ENCODE measurements at regions of chr6 and their contacts with region 1.

Region 1: GRCh38 chr6:137811121-137811915 is 55.7 kb upstream of the TNFAIP3 start:
- DNase-seq: peak; percentile 90
- ATAC-seq: peak; percentile 91
- H3K4me3 ChIP-seq: no peak overlapping the region; a peak in 1 of 6 replicates
- H3K27ac ChIP-seq: peak overlapping the region; percentile 65
- H3K4me1 ChIP-seq: peaks cover 66% of the 10 kb centered on the region
- H3K27me3 ChIP-seq: no peaks in the 10 kb centered on the region
- CTCF ChIP-seq: peak; percentile 10; the same call in 1 of the 2 replicates
- EP300 ChIP-seq: peak in 1 of 2 experiments; percentile 58; a peak in 1 of 4 replicates
- POLR2A ChIP-seq: peak; percentile 37 to 46; a peak in 1 of 4 replicates
- RAD21 ChIP-seq: 0 out of 2 replicates have a peak, but pooled peaks have one; percentile 32

Region 2: DNA sequence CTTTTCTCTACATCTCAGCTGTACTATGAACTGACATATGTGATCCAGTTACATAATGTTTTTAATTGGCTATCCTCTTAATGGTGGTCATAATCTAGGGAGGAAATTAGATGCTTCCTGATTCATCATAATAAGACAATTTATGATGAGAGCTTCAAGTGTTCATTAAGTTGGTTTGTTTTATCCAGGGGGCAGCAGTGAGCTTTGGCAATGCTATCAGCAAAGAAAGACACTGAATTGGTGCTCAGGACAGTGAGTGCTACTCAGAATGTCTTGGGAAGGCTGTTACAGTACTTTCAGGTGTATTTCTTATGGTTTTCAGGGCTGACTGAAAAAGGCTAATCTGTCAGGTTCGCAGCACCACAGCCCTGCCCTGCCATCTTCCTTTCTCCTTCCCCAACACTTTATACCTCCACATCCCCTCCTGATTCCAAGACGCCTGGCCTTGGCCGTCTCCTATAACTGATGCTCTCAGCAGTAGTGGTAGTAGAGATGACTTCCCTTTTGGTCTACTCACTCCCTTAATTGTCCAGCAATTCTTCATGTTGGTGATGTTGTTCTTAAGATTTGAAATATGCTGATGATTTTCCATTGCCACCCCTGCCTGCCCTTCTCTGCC is 11.3 kb before region 1 on chr6:
- CTCF ChIA-PET with region 1: no interaction called
- POLR2A ChIA-PET with region 1: interaction called, 7 read pairs
- in situ Hi-C with region 1: no loop called
- intact Hi-C with region 1: loop called (anchors 1 kb)
- DNase-seq: peak; percentile 59
- ATAC-seq: peak; percentile 41; the same call in 2 of the 3 replicates
- H3K4me3 ChIP-seq: no peak overlapping the region
- H3K27ac ChIP-seq: no peak overlapping the region
- H3K4me1 ChIP-seq: peaks cover 100% of the 10 kb centered on the region
- H3K27me3 ChIP-seq: no peaks in the 10 kb centered on the region
- CTCF ChIP-seq: peak; percentile 58
- EP300 ChIP-seq: no peak
- POLR2A ChIP-seq: no peak
- RAD21 ChIP-seq: peak; percentile 52

Region 3: GRCh38 chr6:138275976-138276375 is 464.7 kb after region 1 on chr6:
- CTCF ChIA-PET with region 1: no interaction called
- POLR2A ChIA-PET with region 1: no interaction called
- in situ Hi-C with region 1: no loop called
- intact Hi-C with region 1: no loop called
- DNase-seq: no peak
- ATAC-seq: peak; percentile 84
- H3K4me3 ChIP-seq: no peak overlapping the region
- H3K27ac ChIP-seq: no peak overlapping the region
- H3K4me1 ChIP-seq: no peaks in the 10 kb centered on the region
- H3K27me3 ChIP-seq: no peaks in the 10 kb centered on the region
- CTCF ChIP-seq: no peak
- EP300 ChIP-seq: no peak
- POLR2A ChIP-seq: no peak
- RAD21 ChIP-seq: no peak